CD14-positive monocyte (primary cell): ENCODE measurements at regions of chr10 and their contacts with region 1.

Region 1: DNA sequence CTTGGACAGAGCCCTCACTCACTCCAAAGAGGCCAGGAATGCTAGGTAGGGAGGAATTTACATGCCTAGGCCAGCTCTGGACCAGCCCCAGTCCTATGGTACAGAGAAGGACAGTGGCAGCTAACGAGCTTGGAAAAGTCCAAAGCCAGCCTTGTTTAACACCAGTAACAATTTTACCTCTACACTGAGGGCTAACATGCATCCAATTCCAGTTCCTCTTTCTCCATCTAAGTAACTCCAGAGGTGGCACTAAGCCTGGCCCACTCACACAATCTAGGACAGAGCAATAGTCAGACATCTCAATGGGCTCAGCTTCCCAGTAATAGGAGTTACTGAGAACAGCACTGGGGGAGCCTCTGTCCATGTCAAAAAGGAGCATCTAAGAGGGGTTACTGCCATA is 5.7 kb upstream of the LCOR start:
- DNase-seq: peak in 2 of 3 donors; percentile 20 to 35
- H3K4me3 ChIP-seq: no peak overlapping the region
- H3K4me3 Mint-ChIP-seq: no peak overlapping the region
- H3K27ac ChIP-seq: peak overlapping the region; percentile 36 to 54
- H3K27ac Mint-ChIP-seq: peak overlapping the region; percentile 68 to 96 (median 94)
- H3K4me1 ChIP-seq: peaks cover 35 to 38% of the 10 kb centered on the region in 2 donors
- H3K4me1 Mint-ChIP-seq: peaks cover 35% of the 10 kb centered on the region
- H3K27me3 ChIP-seq: no peaks in the 10 kb centered on the region
- H3K27me3 Mint-ChIP-seq: peaks cover 0 to 4% (median 4%) of the 10 kb centered on the region in 3 donors
- CTCF ChIP-seq: no peak

Region 2: GRCh38 chr10:96306516-96306915 is 519.9 kb before region 1 on chr10:
- intact Hi-C with region 1: no loop called
- DNase-seq: peak in 2 of 3 donors; percentile 17 to 24
- H3K4me3 ChIP-seq: no peak overlapping the region
- H3K4me3 Mint-ChIP-seq: peak overlapping the region; percentile 32 to 68
- H3K27ac ChIP-seq: no peak overlapping the region
- H3K27ac Mint-ChIP-seq: no peak overlapping the region
- H3K4me1 ChIP-seq: peaks cover 17 to 19% of the 10 kb centered on the region in 2 donors
- H3K4me1 Mint-ChIP-seq: peaks cover 35% of the 10 kb centered on the region
- H3K27me3 ChIP-seq: no peaks in the 10 kb centered on the region
- H3K27me3 Mint-ChIP-seq: peaks cover 0 to 1% (median 0%) of the 10 kb centered on the region in 3 donors
- CTCF ChIP-seq: no peak

Region 3: GRCh38 chr10:96765406-96766240 is 60.8 kb before region 1 on chr10:
- intact Hi-C with region 1: loop called (anchors 5 to 10 kb)
- DNase-seq: peak; percentile 57 to 78 (median 77)
- H3K4me3 ChIP-seq: no peak overlapping the region
- H3K4me3 Mint-ChIP-seq: no peak overlapping the region
- H3K27ac ChIP-seq: no peak overlapping the region
- H3K27ac Mint-ChIP-seq: no peak overlapping the region
- H3K4me1 ChIP-seq: peaks cover 6 to 8% of the 10 kb centered on the region in 2 donors
- H3K4me1 Mint-ChIP-seq: peaks cover 18% of the 10 kb centered on the region
- H3K27me3 ChIP-seq: no peaks in the 10 kb centered on the region
- H3K27me3 Mint-ChIP-seq: peaks cover 0 to 3% (median 2%) of the 10 kb centered on the region in 3 donors
- CTCF ChIP-seq: peak; percentile 92

Region 4: GRCh38 chr10:96863922-96864543 is 37.6 kb after region 1 on chr10:
- intact Hi-C with region 1: no loop called
- DNase-seq: peak in 1 of 3 donors; percentile 22
- H3K4me3 ChIP-seq: no peak overlapping the region
- H3K4me3 Mint-ChIP-seq: no peak overlapping the region
- H3K27ac ChIP-seq: no peak overlapping the region
- H3K27ac Mint-ChIP-seq: peak overlapping the region in 2 of 7 donors; percentile 61 to 63
- H3K4me1 ChIP-seq: no peaks in the 10 kb centered on the region
- H3K4me1 Mint-ChIP-seq: peaks cover 7% of the 10 kb centered on the region
- H3K27me3 ChIP-seq: no peaks in the 10 kb centered on the region
- H3K27me3 Mint-ChIP-seq: peaks cover 0 to 2% (median 0%) of the 10 kb centered on the region in 3 donors
- CTCF ChIP-seq: no peak